ENCODE measurements at regions of chr5 and their contacts with region 1.

Region 1: GRCh38 chr5:115262321-115263077 is at the start of gene PGGT1B:
- DNase-seq: peak; percentile 82
- H3K4me3 ChIP-seq: peak within 1 kb of the TSS; percentile 83
- H3K27ac ChIP-seq: peak within 1 kb of the TSS; percentile 70
- H3K4me1 ChIP-seq: peaks cover 34% of the 10 kb centered on the region
- CTCF ChIP-seq: no peak
- total RNA-seq, gene PGGT1B: 17.8 and 19.7 TPM in 2 replicates

Region 2: DNA sequence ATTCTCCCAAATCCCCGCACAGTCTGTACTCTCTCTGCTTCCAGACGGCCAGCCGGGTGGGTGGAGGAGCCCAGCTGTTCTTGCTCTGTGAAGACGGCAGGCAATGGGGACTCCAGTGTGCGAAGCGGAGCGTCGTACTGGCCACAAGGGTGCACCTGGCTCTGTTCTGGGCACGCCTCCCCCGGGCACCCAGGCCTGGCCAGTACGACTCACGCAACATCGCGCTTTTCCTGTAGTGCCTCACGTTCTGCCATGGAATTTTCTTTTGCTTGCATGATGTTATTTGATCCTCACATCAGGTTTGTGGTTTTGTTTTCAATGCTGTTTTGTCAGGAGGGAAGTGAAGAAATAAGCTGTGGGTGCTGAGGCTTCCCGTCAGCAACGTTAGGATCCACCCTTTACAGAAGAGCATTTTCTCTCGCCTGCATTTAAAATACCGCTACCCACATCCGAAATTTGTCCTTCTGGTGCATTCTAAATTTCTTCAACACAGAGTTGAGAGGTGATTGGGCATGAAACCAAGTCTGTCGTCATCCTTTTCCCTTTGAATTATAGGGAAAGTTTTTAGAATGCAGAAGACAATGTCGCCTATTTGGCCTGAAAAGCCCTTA is 404.5 kb before region 1 on chr5:
- CTCF ChIA-PET with region 1: no interaction called
- POLR2A ChIA-PET with region 1: no interaction called
- intact Hi-C with region 1: no loop called
- DNase-seq: no peak
- H3K4me3 ChIP-seq: no peak overlapping the region
- H3K27ac ChIP-seq: no peak overlapping the region
- H3K4me1 ChIP-seq: no peaks in the 10 kb centered on the region
- CTCF ChIP-seq: no peak

Region 3: GRCh38 chr5:115209279-115209678 is 53.2 kb before region 1 on chr5:
- CTCF ChIA-PET with region 1: no interaction called
- POLR2A ChIA-PET with region 1: interaction called, 5 read pairs
- intact Hi-C with region 1: loop called (anchors 2 kb)
- DNase-seq: peak; percentile 92
- H3K4me3 ChIP-seq: no peak overlapping the region
- H3K27ac ChIP-seq: peak overlapping the region; percentile 77
- H3K4me1 ChIP-seq: peaks cover 28% of the 10 kb centered on the region
- CTCF ChIP-seq: no peak

Region 4: DNA sequence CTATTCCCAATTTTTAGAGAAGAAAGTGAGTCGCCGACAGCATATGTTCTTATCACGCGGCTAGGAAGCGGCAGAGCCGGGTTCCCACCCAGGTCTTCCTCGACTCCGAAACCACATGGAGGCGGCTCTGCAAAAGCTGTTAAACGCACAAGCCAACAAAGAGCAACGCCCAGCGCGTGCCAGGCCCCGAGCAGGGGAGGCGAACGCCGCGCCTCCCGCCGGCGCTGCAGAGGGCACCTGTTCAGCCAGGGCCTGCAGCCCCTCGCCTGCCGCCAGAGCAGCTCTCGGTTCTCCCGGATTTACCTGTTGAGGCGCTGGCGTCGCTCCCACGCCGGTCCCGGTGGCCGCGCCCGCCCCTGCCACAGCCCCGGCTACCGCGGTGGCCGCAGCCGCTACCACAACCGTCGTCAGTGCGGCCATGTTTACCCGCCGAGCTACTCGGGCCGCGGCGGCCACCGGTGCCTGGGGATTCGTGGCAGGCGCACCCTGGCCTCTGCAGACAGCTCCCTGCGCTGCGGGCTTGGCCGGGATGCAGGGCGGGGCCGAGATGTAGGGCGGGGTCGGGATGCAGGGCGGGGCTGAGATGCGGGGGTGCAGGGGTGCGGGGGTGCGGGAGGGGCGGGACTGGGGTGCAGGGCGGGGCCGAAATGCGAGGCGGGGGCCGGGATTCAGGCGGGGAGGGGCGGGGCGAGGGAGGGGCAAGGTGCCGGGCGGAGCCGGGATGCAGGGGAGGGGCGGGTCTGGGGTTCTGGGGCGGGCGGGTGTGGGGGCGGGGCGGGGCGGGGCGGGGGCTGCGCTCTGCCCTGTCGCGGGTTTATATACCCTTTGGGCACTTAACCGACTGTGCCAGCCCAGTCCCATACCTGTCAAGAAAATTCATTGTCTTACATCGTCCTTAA is 33.9 kb after region 1 on chr5 and contains the start of gene CCDC112:
- CTCF ChIA-PET with region 1: no interaction called
- POLR2A ChIA-PET with region 1: interaction called, 9 read pairs
- intact Hi-C with region 1: loop called (anchors 1 kb)
- DNase-seq: peak; percentile 79
- H3K4me3 ChIP-seq: peak within 1 kb of the TSS; percentile 83
- H3K27ac ChIP-seq: peak within 1 kb of the TSS; percentile 1
- H3K4me1 ChIP-seq: peaks cover 14% of the 10 kb centered on the region
- CTCF ChIP-seq: no peak
- total RNA-seq, gene CCDC112: 15.8 and 32.8 TPM in 2 replicates

Region 5: DNA sequence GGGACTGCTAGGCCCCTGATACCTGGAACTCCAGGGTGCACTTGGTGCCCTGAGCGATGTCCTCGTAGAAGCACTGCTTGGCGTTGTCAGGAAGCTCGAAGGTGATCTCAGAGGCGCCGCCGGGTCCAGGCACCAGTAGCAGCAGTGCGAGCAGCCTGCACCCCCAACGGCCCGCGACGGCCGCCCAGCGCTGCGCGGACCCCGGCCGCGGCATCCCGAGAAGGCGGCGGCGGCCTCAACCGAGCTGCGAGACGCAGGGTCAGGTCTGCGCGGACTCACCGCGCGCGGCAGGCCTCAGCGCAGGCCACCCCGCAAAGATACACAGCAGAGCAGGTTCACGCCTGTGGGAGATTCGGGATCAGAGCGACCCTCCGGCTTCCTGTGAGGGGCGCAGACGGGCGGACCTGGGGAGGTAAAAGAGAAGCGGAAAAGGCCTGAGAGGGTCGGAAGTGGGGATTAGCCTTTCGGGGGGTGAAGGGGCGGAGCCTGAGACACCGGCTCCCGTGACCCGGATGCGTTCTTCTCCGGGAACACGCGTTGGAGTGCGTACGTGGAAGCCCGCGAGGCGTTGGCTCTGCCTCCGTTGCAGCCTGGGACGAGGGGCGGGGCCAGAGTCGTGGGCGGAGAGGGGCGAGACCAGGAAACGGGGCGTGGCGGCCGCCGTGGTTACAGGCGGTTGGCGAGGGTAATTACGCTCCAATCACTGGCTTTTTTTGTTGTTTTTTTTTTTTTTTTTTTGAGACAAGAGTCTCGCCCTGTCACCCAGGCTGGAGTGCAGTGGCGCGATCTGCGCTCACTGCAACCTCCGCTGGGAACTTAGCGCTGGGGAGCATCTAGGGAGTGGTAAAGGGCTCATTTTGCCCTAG is 363.3 kb after region 1 on chr5 and contains the start of gene TMED7:
- CTCF ChIA-PET with region 1: no interaction called
- POLR2A ChIA-PET with region 1: interaction called, 3 read pairs
- intact Hi-C with region 1: loop called (anchors 1 kb)
- DNase-seq: peak; percentile 98
- H3K4me3 ChIP-seq: peak within 1 kb of the TSS; percentile 94
- H3K27ac ChIP-seq: peak within 1 kb of the TSS; percentile 70
- H3K4me1 ChIP-seq: peaks cover 39% of the 10 kb centered on the region
- CTCF ChIP-seq: 0 out of 2 replicates have a peak, but pooled peaks have one; percentile 17
- total RNA-seq, gene TMED7: 50.9 and 55.1 TPM in 2 replicates